ENCODE measurements at regions of chr13 and their contacts with region 1.

Region 1: DNA sequence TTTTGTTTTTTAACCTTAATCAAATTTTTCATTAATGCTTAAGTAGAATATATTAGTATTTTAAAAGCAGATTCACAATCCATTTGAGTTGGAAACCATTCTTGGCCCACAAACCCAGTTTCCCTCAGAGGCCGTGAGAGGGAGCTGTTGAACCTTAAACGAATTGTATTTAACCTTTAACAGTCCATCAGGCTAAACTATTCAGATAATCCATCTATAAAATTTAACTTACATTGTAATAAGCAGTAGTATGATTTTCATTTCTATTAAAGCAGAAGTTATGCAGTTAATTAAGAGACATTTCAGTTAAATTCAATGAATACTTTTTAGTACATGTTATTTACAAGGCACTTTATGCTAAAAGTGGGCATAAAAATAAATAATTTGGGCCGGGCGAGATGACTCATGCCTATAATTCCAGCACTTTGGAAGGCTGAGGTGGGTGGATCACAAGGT is 123.1 kb upstream of the C1QTNF9B start:
- DNase-seq: no peak
- ATAC-seq: peak; percentile 82
- H3K4me3 ChIP-seq: no peak overlapping the region
- H3K27ac ChIP-seq: no peak overlapping the region
- H3K4me1 ChIP-seq: no peaks in the 10 kb centered on the region
- H3K27me3 ChIP-seq: no peaks in the 10 kb centered on the region
- CTCF ChIP-seq: peak; percentile 63 to 75 (median 65)
- EP300 ChIP-seq: no peak
- POLR2A ChIP-seq: no peak
- RAD21 ChIP-seq: peak; percentile 88

Region 2: GRCh38 chr13:23960566-23961156 is 59.7 kb before region 1 on chr13:
- CTCF ChIA-PET with region 1: interaction called, 33 read pairs
- POLR2A ChIA-PET with region 1: no interaction called
- RAD21 ChIA-PET with region 1: interaction called, 13 read pairs
- SMC1A ChIA-PET with region 1: interaction called, 37 read pairs
- in situ Hi-C with region 1: no loop called
- intact Hi-C with region 1: no loop called
- DNase-seq: no peak
- ATAC-seq: peak; percentile 38
- H3K4me3 ChIP-seq: no peak overlapping the region
- H3K27ac ChIP-seq: no peak overlapping the region
- H3K4me1 ChIP-seq: peaks cover 4% of the 10 kb centered on the region; the same call in 1 of the 2 replicates
- H3K27me3 ChIP-seq: no peaks in the 10 kb centered on the region; a peak in 1 of 4 replicates
- CTCF ChIP-seq: peak; percentile 50 to 58 (median 55)
- EP300 ChIP-seq: no peak
- POLR2A ChIP-seq: no peak
- RAD21 ChIP-seq: peak; percentile 61

Region 3: DNA sequence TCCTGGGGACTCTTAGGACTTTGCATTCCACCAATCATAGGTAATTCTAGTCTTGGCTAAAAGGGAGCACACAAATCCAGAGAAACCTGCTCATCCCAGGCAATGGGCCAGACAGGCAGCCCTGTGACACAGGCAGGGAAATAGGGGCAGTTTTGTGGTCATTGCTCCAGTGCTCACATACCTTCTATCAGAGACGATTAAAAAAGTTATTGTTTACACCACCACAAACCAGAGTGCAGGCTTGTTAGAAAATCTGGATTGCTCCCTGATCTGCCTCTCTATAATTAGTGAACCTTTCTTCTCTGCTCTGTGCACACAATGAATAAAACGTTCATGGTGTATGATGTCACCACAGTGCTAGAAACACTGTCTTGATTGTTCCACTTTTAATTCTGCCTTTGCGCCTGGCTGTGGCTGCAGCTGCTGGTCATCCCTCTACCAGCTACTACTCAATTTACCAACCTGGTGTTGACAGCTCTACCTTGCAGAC is 18.5 kb after region 1 on chr13:
- CTCF ChIA-PET with region 1: interaction called, 10 read pairs
- POLR2A ChIA-PET with region 1: no interaction called
- RAD21 ChIA-PET with region 1: interaction called, 11 read pairs
- SMC1A ChIA-PET with region 1: interaction called, 20 read pairs
- in situ Hi-C with region 1: no loop called
- intact Hi-C with region 1: no loop called
- DNase-seq: no peak
- ATAC-seq: peak; percentile 74
- H3K4me3 ChIP-seq: no peak overlapping the region
- H3K27ac ChIP-seq: no peak overlapping the region
- H3K4me1 ChIP-seq: peaks cover 22% of the 10 kb centered on the region
- H3K27me3 ChIP-seq: peaks cover 0 to 3% of the 10 kb centered on the region in 2 experiments; a peak in 2 of 4 replicates
- CTCF ChIP-seq: no peak
- EP300 ChIP-seq: peak in 1 of 2 experiments; percentile 27; a peak in 1 of 4 replicates
- POLR2A ChIP-seq: no peak
- RAD21 ChIP-seq: no peak

Region 4: GRCh38 chr13:24220086-24220703 is 199.8 kb after region 1 on chr13:
- CTCF ChIA-PET with region 1: interaction called, 155 read pairs
- POLR2A ChIA-PET with region 1: no interaction called
- RAD21 ChIA-PET with region 1: interaction called, 31 read pairs
- SMC1A ChIA-PET with region 1: interaction called, 74 read pairs
- in situ Hi-C with region 1: loop called (anchors 5 kb)
- intact Hi-C with region 1: loop called (anchors 1 kb)
- DNase-seq: no peak
- ATAC-seq: peak; percentile 89
- H3K4me3 ChIP-seq: no peak overlapping the region
- H3K27ac ChIP-seq: no peak overlapping the region
- H3K4me1 ChIP-seq: peaks cover 35% of the 10 kb centered on the region
- H3K27me3 ChIP-seq: no peaks in the 10 kb centered on the region
- CTCF ChIP-seq: peak; percentile 65 to 89 (median 71)
- EP300 ChIP-seq: no peak
- POLR2A ChIP-seq: no peak
- RAD21 ChIP-seq: peak; percentile 97